ENCODE measurements at regions of chr19 and their contacts with region 1.

Region 1: GRCh38 chr19:17859533-17860330 is at the start of gene RPL18A:
- DNase-seq: peak; percentile 97 to 100 (median 99)
- ATAC-seq: peak; percentile 96
- H3K4me3 ChIP-seq: peak within 1 kb of the TSS; percentile 82 to 94
- H3K4me3 Mint-ChIP-seq: peak within 1 kb of the TSS; percentile 98
- H3K27ac ChIP-seq: peak within 1 kb of the TSS; percentile 64 to 73
- H3K27ac Mint-ChIP-seq: peak within 1 kb of the TSS; percentile 97
- H3K4me1 ChIP-seq: peaks cover 23% of the 10 kb centered on the region
- H3K4me1 Mint-ChIP-seq: peaks cover 39% of the 10 kb centered on the region
- H3K27me3 ChIP-seq: no peaks in the 10 kb centered on the region
- H3K27me3 Mint-ChIP-seq: no peaks in the 10 kb centered on the region
- CTCF ChIP-seq: peak; percentile 75
- total RNA-seq, gene RPL18A: 3,915 to 3,952 TPM

Region 2: GRCh38 chr19:17441241-17442021 is 418.3 kb before region 1 on chr19:
- CTCF ChIA-PET with region 1: no interaction called
- POLR2A ChIA-PET with region 1: interaction called, 3 read pairs
- intact Hi-C with region 1: loop called in 1 of 2 experiments (anchors 1 kb)
- DNase-seq: peak in 5 of 9 experiments; percentile 21 to 64 (median 52)
- ATAC-seq: peak; percentile 69
- H3K4me3 ChIP-seq: no peak overlapping the region
- H3K4me3 Mint-ChIP-seq: no peak overlapping the region
- H3K27ac ChIP-seq: no peak overlapping the region
- H3K27ac Mint-ChIP-seq: no peak overlapping the region
- H3K4me1 ChIP-seq: no peaks in the 10 kb centered on the region
- H3K4me1 Mint-ChIP-seq: no peaks in the 10 kb centered on the region
- H3K27me3 ChIP-seq: no peaks in the 10 kb centered on the region
- H3K27me3 Mint-ChIP-seq: no peaks in the 10 kb centered on the region
- CTCF ChIP-seq: peak; percentile 33

Region 3: GRCh38 chr19:17526922-17527321 is 332.8 kb before region 1 on chr19:
- CTCF ChIA-PET with region 1: no interaction called
- POLR2A ChIA-PET with region 1: no interaction called
- intact Hi-C with region 1: no loop called
- DNase-seq: no peak
- ATAC-seq: peak; percentile 32
- H3K4me3 ChIP-seq: no peak overlapping the region
- H3K4me3 Mint-ChIP-seq: peak overlapping the region; percentile 37
- H3K27ac ChIP-seq: no peak overlapping the region
- H3K27ac Mint-ChIP-seq: no peak overlapping the region
- H3K4me1 ChIP-seq: peaks cover 39% of the 10 kb centered on the region
- H3K4me1 Mint-ChIP-seq: peaks cover 32% of the 10 kb centered on the region
- H3K27me3 ChIP-seq: no peaks in the 10 kb centered on the region
- H3K27me3 Mint-ChIP-seq: no peaks in the 10 kb centered on the region
- CTCF ChIP-seq: no peak

Region 4: GRCh38 chr19:17605761-17606745 is 253.7 kb before region 1 on chr19:
- CTCF ChIA-PET with region 1: interaction called, 6 read pairs
- POLR2A ChIA-PET with region 1: no interaction called
- intact Hi-C with region 1: loop called in 1 of 2 experiments (anchors 5 kb)
- DNase-seq: peak; percentile 61 to 94 (median 80)
- ATAC-seq: peak; percentile 98
- H3K4me3 ChIP-seq: peak overlapping the region; percentile 27 to 69
- H3K4me3 Mint-ChIP-seq: peak overlapping the region; percentile 80
- H3K27ac ChIP-seq: peak overlapping the region in 1 of 2 experiments; percentile 51
- H3K27ac Mint-ChIP-seq: no peak overlapping the region
- H3K4me1 ChIP-seq: peaks cover 10% of the 10 kb centered on the region
- H3K4me1 Mint-ChIP-seq: peaks cover 8% of the 10 kb centered on the region
- H3K27me3 ChIP-seq: peaks cover 6 to 7% of the 10 kb centered on the region in 2 experiments
- H3K27me3 Mint-ChIP-seq: peaks cover 32% of the 10 kb centered on the region
- CTCF ChIP-seq: peak; percentile 75

Region 5: DNA sequence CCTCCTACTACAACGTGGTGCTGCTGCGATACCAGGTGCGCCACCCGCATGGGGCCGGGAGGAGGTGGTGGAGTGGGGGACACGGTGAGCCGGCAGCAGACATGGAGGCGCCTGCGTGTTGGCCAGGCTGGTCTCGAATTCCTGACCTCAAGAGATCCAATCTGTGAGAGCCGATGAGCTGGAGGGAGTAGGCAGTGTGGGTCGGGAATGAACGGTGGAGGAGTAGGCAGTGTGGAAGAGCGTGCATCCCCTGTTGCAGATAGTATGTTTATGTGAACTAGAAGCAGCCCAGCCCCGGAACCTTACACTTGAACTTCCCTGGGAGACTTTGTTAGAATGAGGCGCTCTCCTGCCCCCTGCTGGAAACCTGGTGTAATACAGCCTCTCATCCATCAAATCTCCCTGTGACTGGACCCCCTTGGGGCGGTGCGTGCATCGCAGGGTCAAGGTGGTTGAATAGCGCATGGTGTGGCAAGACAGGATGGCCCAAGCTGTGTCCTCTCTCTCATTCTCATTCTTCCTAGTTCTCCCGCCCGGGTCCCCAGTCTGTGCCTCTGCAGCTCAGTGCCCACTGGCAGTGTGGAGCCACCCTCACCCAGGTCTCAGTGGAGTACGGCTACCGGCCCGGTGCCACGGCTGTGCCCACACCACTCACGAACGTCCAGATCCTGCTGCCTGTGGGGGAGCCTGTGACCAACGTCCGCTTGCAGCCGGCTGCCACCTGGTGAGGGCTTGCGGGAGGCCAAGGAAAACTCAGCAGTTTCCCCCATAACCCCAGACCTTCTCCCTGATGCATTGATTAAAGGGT is 75.3 kb before region 1 on chr19:
- CTCF ChIA-PET with region 1: interaction called, 33 read pairs
- POLR2A ChIA-PET with region 1: no interaction called
- intact Hi-C with region 1: loop called (anchors 1 kb)
- DNase-seq: peak; percentile 55 to 81 (median 74)
- ATAC-seq: peak; percentile 94
- H3K4me3 ChIP-seq: no peak overlapping the region
- H3K4me3 Mint-ChIP-seq: no peak overlapping the region
- H3K27ac ChIP-seq: no peak overlapping the region
- H3K27ac Mint-ChIP-seq: no peak overlapping the region
- H3K4me1 ChIP-seq: peaks cover 4% of the 10 kb centered on the region
- H3K4me1 Mint-ChIP-seq: peaks cover 11% of the 10 kb centered on the region
- H3K27me3 ChIP-seq: no peaks in the 10 kb centered on the region
- H3K27me3 Mint-ChIP-seq: no peaks in the 10 kb centered on the region
- CTCF ChIP-seq: peak; percentile 82

Region 6: GRCh38 chr19:17932485-17933338 is 73.0 kb after region 1 on chr19 and contains the start of gene CCDC124:
- CTCF ChIA-PET with region 1: interaction called, 130 read pairs
- POLR2A ChIA-PET with region 1: interaction called, 125 read pairs
- intact Hi-C with region 1: loop called (anchors 1 kb)
- DNase-seq: peak; percentile 83 to 95 (median 91)
- ATAC-seq: peak; percentile 92
- H3K4me3 ChIP-seq: peak within 1 kb of the TSS; percentile 76 to 82
- H3K4me3 Mint-ChIP-seq: peak within 1 kb of the TSS; percentile 92
- H3K27ac ChIP-seq: peak within 1 kb of the TSS; percentile 75 to 99
- H3K27ac Mint-ChIP-seq: peak within 1 kb of the TSS; percentile 95
- H3K4me1 ChIP-seq: peaks cover 15% of the 10 kb centered on the region
- H3K4me1 Mint-ChIP-seq: peaks cover 21% of the 10 kb centered on the region
- H3K27me3 ChIP-seq: no peaks in the 10 kb centered on the region
- H3K27me3 Mint-ChIP-seq: no peaks in the 10 kb centered on the region
- CTCF ChIP-seq: peak; percentile 89
- total RNA-seq, gene CCDC124: 29.7 to 35.9 TPM

Region 7: DNA sequence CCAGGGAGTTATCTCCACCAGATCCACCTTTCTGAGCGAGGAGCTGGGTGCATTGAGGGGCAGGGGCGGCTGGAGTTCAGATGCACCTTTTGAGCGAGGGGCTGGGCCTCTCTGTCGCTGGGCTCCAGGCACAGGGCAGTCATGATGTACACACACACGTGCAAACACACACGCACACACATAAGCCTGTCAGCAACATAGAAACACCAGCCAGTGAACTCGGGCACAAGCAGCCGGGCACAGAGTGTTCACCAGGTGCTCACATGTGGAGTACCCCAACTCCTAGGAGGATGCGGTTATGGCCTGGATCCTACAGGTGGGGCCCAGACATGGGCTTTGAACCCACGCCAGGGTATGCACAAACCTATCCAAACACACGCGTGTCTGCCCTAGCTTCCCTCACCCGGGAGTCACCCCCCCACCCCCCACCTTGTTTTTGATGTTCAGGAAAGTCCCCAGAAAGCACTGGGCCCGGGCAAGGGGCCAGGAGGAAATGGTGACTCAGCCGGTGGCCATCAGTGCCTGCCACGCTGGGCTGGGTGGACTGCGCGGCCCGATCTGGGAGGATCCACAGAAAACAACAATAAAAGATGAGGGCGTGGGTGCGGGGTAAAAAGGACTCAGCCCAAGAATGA is 161.5 kb after region 1 on chr19:
- CTCF ChIA-PET with region 1: no interaction called
- POLR2A ChIA-PET with region 1: no interaction called
- intact Hi-C with region 1: no loop called
- DNase-seq: peak; percentile 48 to 92 (median 80)
- ATAC-seq: peak; percentile 35
- H3K4me3 ChIP-seq: no peak overlapping the region
- H3K4me3 Mint-ChIP-seq: peak overlapping the region; percentile 42
- H3K27ac ChIP-seq: peak overlapping the region; percentile 34 to 62
- H3K27ac Mint-ChIP-seq: peak overlapping the region; percentile 94
- H3K4me1 ChIP-seq: peaks cover 58% of the 10 kb centered on the region
- H3K4me1 Mint-ChIP-seq: peaks cover 64% of the 10 kb centered on the region
- H3K27me3 ChIP-seq: no peaks in the 10 kb centered on the region
- H3K27me3 Mint-ChIP-seq: no peaks in the 10 kb centered on the region
- CTCF ChIP-seq: no peak

Region 8: GRCh38 chr19:18058208-18059030 is 198.7 kb after region 1 on chr19:
- CTCF ChIA-PET with region 1: interaction called, 3 read pairs
- POLR2A ChIA-PET with region 1: no interaction called
- intact Hi-C with region 1: loop called in 1 of 2 experiments (anchors 1 kb)
- DNase-seq: peak; percentile 67 to 92 (median 83)
- ATAC-seq: peak; percentile 98
- H3K4me3 ChIP-seq: peak overlapping the region in 1 of 2 experiments; percentile 23
- H3K4me3 Mint-ChIP-seq: peak overlapping the region; percentile 18
- H3K27ac ChIP-seq: peak overlapping the region; percentile 35 to 60
- H3K27ac Mint-ChIP-seq: peak overlapping the region; percentile 86
- H3K4me1 ChIP-seq: peaks cover 17% of the 10 kb centered on the region
- H3K4me1 Mint-ChIP-seq: peaks cover 12% of the 10 kb centered on the region
- H3K27me3 ChIP-seq: no peaks in the 10 kb centered on the region
- H3K27me3 Mint-ChIP-seq: no peaks in the 10 kb centered on the region
- CTCF ChIP-seq: peak; percentile 95

Region 9: DNA sequence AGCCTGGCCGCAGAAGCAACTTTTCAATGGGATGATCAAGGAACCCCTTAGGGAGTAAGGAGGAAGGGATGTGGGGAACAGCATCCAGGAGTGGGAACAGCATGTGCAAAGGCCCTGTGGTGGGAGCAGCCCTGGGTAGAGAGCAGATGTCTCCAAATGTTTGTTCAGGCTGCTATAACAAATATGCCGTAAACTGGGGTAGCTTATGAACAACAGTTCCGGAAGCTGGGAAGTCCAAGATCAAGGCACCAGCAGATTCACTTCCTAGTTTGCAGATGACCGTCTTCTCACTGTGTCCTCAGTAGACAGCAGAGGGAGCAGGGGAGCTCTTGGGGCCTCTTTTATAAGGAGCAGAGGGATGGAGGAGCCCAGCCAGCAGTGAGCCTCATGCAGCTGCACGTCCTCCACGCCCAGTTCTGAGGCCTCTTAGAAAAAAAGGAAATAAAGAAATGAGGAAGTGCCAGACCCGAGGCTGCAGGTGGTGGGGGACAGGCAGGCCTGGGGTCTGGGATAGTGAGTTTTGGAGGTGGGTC is 541.9 kb after region 1 on chr19:
- CTCF ChIA-PET with region 1: no interaction called
- POLR2A ChIA-PET with region 1: no interaction called
- intact Hi-C with region 1: no loop called
- DNase-seq: peak in 1 of 9 experiments; percentile 38
- ATAC-seq: no peak
- H3K4me3 ChIP-seq: no peak overlapping the region
- H3K4me3 Mint-ChIP-seq: no peak overlapping the region
- H3K27ac ChIP-seq: no peak overlapping the region
- H3K27ac Mint-ChIP-seq: no peak overlapping the region
- H3K4me1 ChIP-seq: peaks cover 8% of the 10 kb centered on the region
- H3K4me1 Mint-ChIP-seq: peaks cover 3% of the 10 kb centered on the region
- H3K27me3 ChIP-seq: peaks cover 7 to 8% of the 10 kb centered on the region in 2 experiments
- H3K27me3 Mint-ChIP-seq: peaks cover 10% of the 10 kb centered on the region
- CTCF ChIP-seq: no peak

Measured in CD8-positive, alpha-beta T cell (primary cell).